T-cell (primary cell): ENCODE measurements at regions of chr3 and their contacts with region 1.

Region 1: GRCh38 chr3:169914321-169914720 is 2.9 kb downstream of the SAMD7 start:
- DNase-seq: no peak
- ATAC-seq: no peak
- H3K4me3 ChIP-seq: no peak overlapping the region
- H3K4me3 Mint-ChIP-seq: no peak overlapping the region
- H3K27ac ChIP-seq: no peak overlapping the region
- H3K27ac Mint-ChIP-seq: no peak overlapping the region
- H3K4me1 ChIP-seq: no peaks in the 10 kb centered on the region
- H3K4me1 Mint-ChIP-seq: peaks cover 0 to 6% (median 4%) of the 10 kb centered on the region in 3 donors
- H3K27me3 ChIP-seq: no peaks in the 10 kb centered on the region
- H3K27me3 Mint-ChIP-seq: no peaks in the 10 kb centered on the region

Region 2: GRCh38 chr3:170205302-170205701 is 291.0 kb after region 1 on chr3:
- CTCF ChIA-PET with region 1: no interaction called
- POLR2A ChIA-PET with region 1: interaction called in 1 of 2 experiments, 10 read pairs
- DNase-seq: no peak
- ATAC-seq: no peak
- H3K4me3 ChIP-seq: no peak overlapping the region
- H3K4me3 Mint-ChIP-seq: no peak overlapping the region
- H3K27ac ChIP-seq: no peak overlapping the region
- H3K27ac Mint-ChIP-seq: no peak overlapping the region
- H3K4me1 ChIP-seq: no peaks in the 10 kb centered on the region
- H3K4me1 Mint-ChIP-seq: no peaks in the 10 kb centered on the region
- H3K27me3 ChIP-seq: peaks cover 0 to 25% of the 10 kb centered on the region in 2 experiments
- H3K27me3 Mint-ChIP-seq: peaks cover 10 to 21% of the 10 kb centered on the region in 2 donors